Left lung (tissue), 14 donors: ENCODE measurements at regions of chr11 and their contacts with region 1.

Region 1: DNA sequence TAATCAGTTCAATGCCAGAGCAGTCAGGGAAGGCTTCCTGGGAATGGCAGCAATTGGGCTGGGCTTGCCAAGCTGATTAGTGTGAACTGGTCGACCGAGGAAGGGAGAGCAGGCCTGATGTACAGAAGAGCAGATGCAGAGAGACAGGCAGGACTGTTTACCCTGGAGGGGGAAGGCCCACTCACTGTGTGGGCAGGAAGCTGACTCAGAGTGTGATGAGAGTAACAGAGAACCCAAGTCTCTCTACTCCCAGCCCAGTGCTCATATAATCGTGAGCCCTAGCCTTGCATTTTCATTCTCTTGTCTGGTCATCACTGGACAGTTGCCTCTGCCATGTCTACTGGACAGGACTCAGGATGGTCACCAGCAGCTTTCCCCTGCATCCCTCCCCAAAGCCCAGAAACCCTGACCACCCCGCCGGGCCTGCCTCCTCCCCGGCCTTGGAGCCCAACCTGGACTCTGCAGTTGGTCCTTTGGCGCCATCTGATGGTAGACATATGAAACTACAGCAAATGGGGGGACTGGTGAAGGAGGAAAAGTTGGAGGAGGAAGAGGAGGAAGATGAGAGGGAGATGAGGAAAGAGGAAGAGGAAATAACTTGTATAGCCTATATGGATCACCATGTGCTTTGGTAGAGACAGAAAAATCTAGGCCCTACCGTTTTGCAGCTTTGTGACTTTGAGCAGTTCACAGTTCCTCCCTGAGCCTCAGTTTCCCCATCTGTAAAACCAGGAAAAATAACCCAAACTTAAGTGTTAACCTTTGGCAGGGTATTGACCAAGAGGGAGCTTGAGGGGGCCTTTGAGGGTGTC is 43.4 kb upstream of the PRDM11 start:
- DNase-seq: peak in 3 of 4 donors; percentile 46 to 85 (median 76)
- ATAC-seq: peak; percentile 82
- H3K4me3 ChIP-seq: no peak overlapping the region
- H3K27ac ChIP-seq: peak overlapping the region in 1 of 2 donors; percentile 60
- H3K4me1 ChIP-seq: peaks cover 0 to 13% of the 10 kb centered on the region in 2 donors
- H3K27me3 ChIP-seq: peaks cover 0 to 10% of the 10 kb centered on the region in 2 donors
- CTCF ChIP-seq: peak; percentile 94

Region 2: GRCh38 chr11:44550123-44550522 is 552.9 kb before region 1 on chr11:
- intact Hi-C with region 1: no loop called
- DNase-seq: no peak
- ATAC-seq: no peak
- H3K4me3 ChIP-seq: no peak overlapping the region
- H3K27ac ChIP-seq: no peak overlapping the region
- H3K4me1 ChIP-seq: no peaks in the 10 kb centered on the region
- H3K27me3 ChIP-seq: no peaks in the 10 kb centered on the region
- CTCF ChIP-seq: no peak

Region 3: DNA sequence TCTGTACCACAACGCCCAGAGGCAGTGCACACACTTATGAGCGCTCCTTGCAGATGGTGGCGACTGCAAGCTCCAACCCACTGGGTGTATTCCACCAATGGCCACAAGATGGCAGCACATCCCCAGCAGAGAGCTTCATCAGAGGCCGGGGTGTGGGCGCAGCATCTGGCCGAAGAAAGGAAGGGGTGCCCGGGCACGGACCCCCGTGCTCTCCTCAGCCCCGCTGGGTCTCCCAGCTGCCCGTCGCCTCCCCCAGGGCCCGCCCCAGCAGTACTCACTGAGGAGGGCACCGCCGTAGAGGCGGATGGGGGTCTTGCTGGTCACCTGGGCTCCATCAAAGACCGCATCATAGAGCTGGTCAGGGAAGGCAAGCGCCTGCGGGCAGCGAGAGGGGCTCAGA is 166.5 kb before region 1 on chr11:
- intact Hi-C with region 1: loop called (anchors 2 to 10 kb)
- DNase-seq: peak; percentile 76 to 90 (median 84)
- ATAC-seq: peak; percentile 95
- H3K4me3 ChIP-seq: no peak overlapping the region
- H3K27ac ChIP-seq: no peak overlapping the region
- H3K4me1 ChIP-seq: peaks cover 0 to 15% of the 10 kb centered on the region in 2 donors
- H3K27me3 ChIP-seq: no peaks in the 10 kb centered on the region
- CTCF ChIP-seq: peak; percentile 98

Region 4: GRCh38 chr11:45298718-45299117 is 195.7 kb after region 1 on chr11:
- intact Hi-C with region 1: loop called in 1 of 2 experiments (anchors 5 kb)
- DNase-seq: no peak
- ATAC-seq: no peak
- H3K4me3 ChIP-seq: no peak overlapping the region
- H3K27ac ChIP-seq: no peak overlapping the region
- H3K4me1 ChIP-seq: no peaks in the 10 kb centered on the region
- H3K27me3 ChIP-seq: no peaks in the 10 kb centered on the region
- CTCF ChIP-seq: no peak